ENCODE measurements at regions of chr1 and their contacts with region 1.

Region 1: DNA sequence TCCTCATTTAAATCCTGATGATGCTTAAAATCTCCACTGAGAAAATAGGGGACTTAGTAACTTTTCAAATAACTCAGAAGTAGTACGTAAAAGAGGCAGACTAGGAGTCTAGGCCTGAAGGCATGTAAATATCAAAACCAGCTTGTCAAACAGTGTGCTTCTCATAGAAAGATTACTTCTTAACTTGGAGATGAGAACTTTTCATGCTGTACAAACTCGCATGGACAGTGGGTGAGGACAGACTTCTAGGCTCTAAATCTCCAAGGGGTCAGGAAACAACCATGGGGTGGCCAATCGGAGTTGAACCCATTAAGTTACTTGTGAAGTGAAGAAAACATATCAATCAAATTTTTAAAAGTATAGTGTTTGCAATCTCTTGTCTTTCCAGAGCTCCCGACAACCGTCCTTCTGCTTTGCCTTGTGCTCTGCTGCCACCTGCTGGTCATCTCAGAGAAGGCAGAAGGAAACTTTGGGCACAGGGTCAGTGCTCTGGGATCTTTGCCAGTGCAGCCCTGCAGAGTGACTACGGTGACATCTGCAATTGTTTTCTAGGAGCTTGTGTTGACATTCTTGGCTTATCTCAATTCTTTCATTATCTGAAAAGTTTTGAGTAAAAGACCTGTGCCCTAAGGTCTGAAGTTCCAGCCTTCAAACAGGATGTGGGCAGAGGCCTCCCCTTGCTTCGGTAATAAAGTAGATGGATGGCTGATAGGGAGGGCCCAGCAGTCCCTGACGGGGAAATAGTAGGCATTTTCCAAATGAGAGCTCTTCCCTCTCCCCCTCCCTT is 105.1 kb upstream of the PDE4B start:
- DNase-seq: peak; percentile 54 to 75 (median 66)
- H3K4me3 ChIP-seq: no peak overlapping the region
- H3K4me3 Mint-ChIP-seq: no peak overlapping the region
- H3K27ac ChIP-seq: no peak overlapping the region
- H3K27ac Mint-ChIP-seq: no peak overlapping the region
- H3K4me1 ChIP-seq: peaks cover 8% of the 10 kb centered on the region
- H3K4me1 Mint-ChIP-seq: peaks cover 0 to 9% (median 4%) of the 10 kb centered on the region in 4 donors
- H3K27me3 ChIP-seq: no peaks in the 10 kb centered on the region
- H3K27me3 Mint-ChIP-seq: peaks cover 6 to 10% of the 10 kb centered on the region in 2 donors

Region 2: GRCh38 chr1:64686828-64687724 is 1000.5 kb before region 1 on chr1:
- CTCF ChIA-PET with region 1: interaction called, 8 read pairs
- POLR2A ChIA-PET with region 1: no interaction called
- intact Hi-C with region 1: loop called (anchors 2 kb)
- DNase-seq: peak; percentile 38 to 47 (median 40)
- H3K4me3 ChIP-seq: no peak overlapping the region
- H3K4me3 Mint-ChIP-seq: no peak overlapping the region
- H3K27ac ChIP-seq: no peak overlapping the region
- H3K27ac Mint-ChIP-seq: no peak overlapping the region
- H3K4me1 ChIP-seq: no peaks in the 10 kb centered on the region
- H3K4me1 Mint-ChIP-seq: no peaks in the 10 kb centered on the region
- H3K27me3 ChIP-seq: no peaks in the 10 kb centered on the region
- H3K27me3 Mint-ChIP-seq: peaks cover 0 to 5% of the 10 kb centered on the region in 2 donors

Region 3: DNA sequence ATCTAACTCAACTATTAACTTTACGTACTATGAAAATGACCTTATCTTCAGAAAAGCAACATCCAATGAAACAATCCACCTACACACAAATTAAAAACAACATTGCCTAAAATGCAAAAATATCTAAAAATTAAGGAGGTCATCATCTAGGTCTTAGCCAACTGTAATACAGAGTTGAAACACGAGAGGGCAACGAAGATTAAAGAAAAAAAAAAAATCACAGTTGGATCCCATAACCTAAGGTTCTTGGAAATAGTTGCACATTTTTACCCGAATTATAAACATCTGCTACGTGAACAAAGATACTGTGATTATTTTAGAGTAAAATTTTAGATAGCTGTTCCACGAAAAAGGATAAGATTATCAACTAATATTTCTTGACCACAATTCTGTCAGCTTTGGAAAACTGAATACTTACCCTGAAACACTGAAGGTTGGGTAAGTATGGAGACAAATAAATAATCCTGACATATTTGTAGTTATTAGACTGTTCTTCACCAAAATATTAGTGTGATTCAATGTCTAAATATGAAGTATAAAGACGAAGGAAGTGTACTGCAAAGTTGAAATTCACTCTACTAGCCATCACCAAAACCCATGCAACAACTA is 627.6 kb before region 1 on chr1:
- CTCF ChIA-PET with region 1: interaction called, 6 read pairs
- POLR2A ChIA-PET with region 1: no interaction called
- intact Hi-C with region 1: loop called (anchors 2 kb)
- DNase-seq: peak in 2 of 5 donors; percentile 25 to 35
- H3K4me3 ChIP-seq: no peak overlapping the region
- H3K4me3 Mint-ChIP-seq: peak overlapping the region in 3 of 8 donors; percentile 7 to 33 (median 32)
- H3K27ac ChIP-seq: no peak overlapping the region
- H3K27ac Mint-ChIP-seq: peak overlapping the region in 6 of 7 donors; percentile 3 to 83 (median 52)
- H3K4me1 ChIP-seq: peaks cover 51% of the 10 kb centered on the region
- H3K4me1 Mint-ChIP-seq: peaks cover 41 to 54% (median 51%) of the 10 kb centered on the region in 4 donors
- H3K27me3 ChIP-seq: no peaks in the 10 kb centered on the region
- H3K27me3 Mint-ChIP-seq: no peaks in the 10 kb centered on the region

Region 4: GRCh38 chr1:65214340-65215027 is 473.1 kb before region 1 on chr1:
- CTCF ChIA-PET with region 1: interaction called, 26 read pairs
- POLR2A ChIA-PET with region 1: no interaction called
- intact Hi-C with region 1: loop called (anchors 1 kb)
- DNase-seq: no peak
- H3K4me3 ChIP-seq: no peak overlapping the region
- H3K4me3 Mint-ChIP-seq: no peak overlapping the region
- H3K27ac ChIP-seq: no peak overlapping the region
- H3K27ac Mint-ChIP-seq: no peak overlapping the region
- H3K4me1 ChIP-seq: no peaks in the 10 kb centered on the region
- H3K4me1 Mint-ChIP-seq: peaks cover 3 to 6% (median 4%) of the 10 kb centered on the region in 4 donors
- H3K27me3 ChIP-seq: no peaks in the 10 kb centered on the region
- H3K27me3 Mint-ChIP-seq: peaks cover 1 to 3% of the 10 kb centered on the region in 2 donors

Region 5: DNA sequence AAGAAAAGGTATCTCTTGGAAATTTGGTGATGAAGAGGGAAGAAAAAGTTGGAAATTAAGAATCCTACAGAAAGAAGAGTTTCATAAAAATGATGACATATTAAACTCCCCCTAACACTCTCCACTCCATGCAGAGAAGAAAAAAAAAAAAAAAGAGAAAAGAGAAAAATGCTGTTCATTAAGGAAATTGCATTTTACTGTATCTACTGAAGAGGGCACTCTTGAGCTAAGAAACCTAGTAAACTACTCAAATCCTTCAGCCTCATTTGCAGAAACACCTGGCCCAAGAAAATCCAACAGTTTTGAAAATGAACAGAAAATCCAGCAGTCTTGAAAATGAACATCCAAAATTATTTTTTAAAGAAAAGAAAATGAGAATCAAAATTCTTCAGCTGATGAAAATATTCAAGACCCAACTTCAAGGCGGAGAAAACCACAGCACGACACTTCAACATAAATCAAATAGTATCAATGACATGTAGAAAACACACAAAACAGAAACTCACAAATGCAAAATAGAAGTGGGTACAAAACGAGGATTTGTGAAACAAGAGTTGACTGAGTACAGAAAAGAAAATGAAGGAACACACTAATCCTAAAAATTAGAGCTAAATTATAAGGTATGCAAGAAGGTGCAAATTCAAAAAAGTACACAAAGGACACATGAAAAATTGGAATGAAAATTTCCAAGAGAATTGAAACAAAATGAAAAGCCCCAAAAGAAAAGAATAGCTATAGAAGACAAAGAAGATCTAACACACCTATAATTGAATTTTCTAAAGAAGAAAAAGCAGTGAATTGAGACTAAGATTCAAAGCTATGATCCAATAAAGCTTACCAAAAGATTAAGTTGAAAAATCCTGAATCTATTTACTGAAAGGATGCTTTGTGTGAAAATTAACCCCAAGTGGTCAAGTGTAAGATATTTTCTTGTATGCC is 451.5 kb before region 1 on chr1:
- CTCF ChIA-PET with region 1: interaction called, 43 read pairs
- POLR2A ChIA-PET with region 1: no interaction called
- intact Hi-C with region 1: no loop called
- DNase-seq: peak in 4 of 5 donors; percentile 23 to 37 (median 24)
- H3K4me3 ChIP-seq: no peak overlapping the region
- H3K4me3 Mint-ChIP-seq: no peak overlapping the region
- H3K27ac ChIP-seq: no peak overlapping the region
- H3K27ac Mint-ChIP-seq: no peak overlapping the region
- H3K4me1 ChIP-seq: no peaks in the 10 kb centered on the region
- H3K4me1 Mint-ChIP-seq: no peaks in the 10 kb centered on the region
- H3K27me3 ChIP-seq: no peaks in the 10 kb centered on the region
- H3K27me3 Mint-ChIP-seq: peaks cover 8 to 11% of the 10 kb centered on the region in 2 donors

Region 6: DNA sequence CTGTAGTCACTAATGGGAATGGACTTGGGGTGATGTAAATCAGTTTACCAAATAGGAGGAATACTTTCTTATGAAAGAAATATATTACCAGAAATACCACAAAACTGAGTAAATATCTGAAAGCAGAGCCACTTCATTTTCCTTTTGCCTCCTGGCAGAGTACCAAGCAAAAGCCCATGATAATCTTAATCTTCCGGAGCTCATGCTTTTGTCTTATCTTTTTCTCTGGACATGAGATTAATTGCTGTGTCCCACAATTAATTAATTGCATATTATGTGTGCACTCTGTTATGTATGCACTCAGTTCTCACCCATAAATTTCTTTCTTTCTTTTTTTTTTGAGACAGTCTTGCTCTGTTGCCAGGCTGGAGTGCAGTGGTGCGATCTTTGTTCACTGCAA is 11.0 kb after region 1 on chr1:
- CTCF ChIA-PET with region 1: interaction called, 32 read pairs
- POLR2A ChIA-PET with region 1: no interaction called
- intact Hi-C with region 1: no loop called
- DNase-seq: no peak
- H3K4me3 ChIP-seq: no peak overlapping the region
- H3K4me3 Mint-ChIP-seq: no peak overlapping the region
- H3K27ac ChIP-seq: no peak overlapping the region
- H3K27ac Mint-ChIP-seq: no peak overlapping the region
- H3K4me1 ChIP-seq: no peaks in the 10 kb centered on the region
- H3K4me1 Mint-ChIP-seq: no peaks in the 10 kb centered on the region
- H3K27me3 ChIP-seq: no peaks in the 10 kb centered on the region
- H3K27me3 Mint-ChIP-seq: peaks cover 6 to 9% of the 10 kb centered on the region in 2 donors

Measured in CD4-positive, alpha-beta memory T cell (primary cell).